AG04449 (cell line): ENCODE measurements at regions of chr11 and their contacts with region 1.

Region 1: GRCh38 chr11:116665523-116665922 is 107.3 kb downstream of the BUD13 start:
- DNase-seq: no peak
- H3K4me3 ChIP-seq: no peak overlapping the region
- CTCF ChIP-seq: no peak

Region 2: DNA sequence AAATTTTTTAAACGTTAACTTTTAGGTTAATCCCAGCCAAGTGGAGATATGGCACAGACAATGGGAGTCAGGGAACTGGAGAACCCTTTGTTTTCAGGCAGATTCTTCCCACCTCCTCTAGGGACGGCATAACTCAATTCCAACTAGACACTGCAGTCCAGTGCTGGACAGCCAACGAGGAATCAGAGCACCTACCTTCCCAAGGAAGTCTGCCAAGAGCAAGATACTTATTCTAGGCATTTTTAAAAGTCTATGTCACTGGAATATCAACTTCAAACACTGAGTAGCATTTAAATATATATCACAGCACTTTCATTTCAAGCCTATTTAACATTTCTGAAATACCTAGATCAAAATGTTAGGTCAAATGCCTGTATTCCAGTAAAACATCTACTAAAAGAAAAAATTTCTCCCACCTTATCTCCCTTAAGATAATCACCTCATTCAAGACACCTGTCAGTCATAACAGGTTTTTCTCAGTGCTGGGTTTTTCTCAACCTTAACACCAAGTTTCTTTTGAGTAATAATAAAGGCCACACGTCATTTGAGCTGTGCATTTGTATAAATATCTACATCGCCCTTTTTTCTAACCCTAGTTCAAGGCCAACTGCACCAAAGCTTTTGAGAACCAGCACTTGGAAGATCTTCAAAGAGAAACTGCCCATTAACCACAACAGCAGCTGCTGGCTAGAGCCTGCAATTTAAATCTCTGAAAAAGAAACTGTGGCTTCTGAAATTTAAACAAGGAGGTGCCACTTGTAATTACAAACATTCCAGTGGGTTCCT is 1168.4 kb before region 1 on chr11:
- CTCF ChIA-PET with region 1: no interaction called
- POLR2A ChIA-PET with region 1: interaction called, 11 read pairs
- DNase-seq: no peak
- H3K4me3 ChIP-seq: no peak overlapping the region
- CTCF ChIP-seq: no peak